Mammary epithelial cell (primary cell): ENCODE measurements at regions of chr17 and their contacts with region 1.

Region 1: GRCh38 chr17:57401556-57402488 is 145.5 kb downstream of the MSI2 start:
- DNase-seq: no peak
- H3K4me3 ChIP-seq: no peak overlapping the region
- H3K27ac ChIP-seq: no peak overlapping the region
- H3K4me1 ChIP-seq: no peaks in the 10 kb centered on the region
- H3K27me3 ChIP-seq: no peaks in the 10 kb centered on the region
- CTCF ChIP-seq: peak; percentile 3 to 19

Region 2: DNA sequence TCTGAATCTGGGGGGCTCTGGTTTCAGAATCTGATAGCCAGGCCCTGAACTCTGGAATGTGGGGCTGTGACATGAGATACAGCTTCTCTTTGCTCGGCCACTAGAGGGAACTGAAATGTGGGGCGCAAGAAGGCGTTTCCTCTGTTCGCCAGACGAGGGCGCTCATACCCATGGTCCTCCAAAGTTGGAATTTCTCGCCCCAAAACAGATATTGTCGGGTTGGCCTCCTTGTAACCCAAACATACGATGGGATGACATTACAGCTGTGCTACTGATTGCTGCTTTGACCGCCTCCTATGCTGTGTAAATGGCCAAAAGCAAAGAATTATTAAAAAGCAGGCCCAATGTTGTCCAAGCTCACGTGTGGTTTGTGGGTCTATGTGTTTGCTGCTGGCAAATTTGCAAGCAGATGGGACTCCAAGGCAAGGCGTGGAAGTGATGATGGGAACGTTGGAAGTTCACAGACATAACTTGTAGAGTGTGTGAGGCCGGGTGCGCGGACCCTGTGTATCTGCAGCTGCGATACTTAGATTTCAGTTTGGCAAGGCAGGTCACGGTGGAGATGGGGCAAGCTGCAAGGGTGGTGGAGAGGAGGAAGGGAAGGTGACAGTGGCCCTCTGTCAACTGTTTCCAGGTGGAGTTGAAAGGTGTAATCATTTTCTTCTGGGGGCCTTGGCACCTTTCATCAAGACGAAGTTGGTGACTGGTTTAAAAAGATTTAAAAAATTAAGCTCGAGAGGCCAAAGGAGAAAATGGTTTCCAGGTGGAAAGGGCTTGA is 158.5 kb before region 1 on chr17:
- CTCF ChIA-PET with region 1: no interaction called
- dilution Hi-C with region 1: no loop called
- in situ Hi-C with region 1: no loop called
- intact Hi-C with region 1: loop called (anchors 1 kb)
- DNase-seq: peak; percentile 45
- H3K4me3 ChIP-seq: no peak overlapping the region
- H3K27ac ChIP-seq: no peak overlapping the region
- H3K4me1 ChIP-seq: no peaks in the 10 kb centered on the region
- H3K27me3 ChIP-seq: no peaks in the 10 kb centered on the region
- CTCF ChIP-seq: peak; percentile 100

Region 3: DNA sequence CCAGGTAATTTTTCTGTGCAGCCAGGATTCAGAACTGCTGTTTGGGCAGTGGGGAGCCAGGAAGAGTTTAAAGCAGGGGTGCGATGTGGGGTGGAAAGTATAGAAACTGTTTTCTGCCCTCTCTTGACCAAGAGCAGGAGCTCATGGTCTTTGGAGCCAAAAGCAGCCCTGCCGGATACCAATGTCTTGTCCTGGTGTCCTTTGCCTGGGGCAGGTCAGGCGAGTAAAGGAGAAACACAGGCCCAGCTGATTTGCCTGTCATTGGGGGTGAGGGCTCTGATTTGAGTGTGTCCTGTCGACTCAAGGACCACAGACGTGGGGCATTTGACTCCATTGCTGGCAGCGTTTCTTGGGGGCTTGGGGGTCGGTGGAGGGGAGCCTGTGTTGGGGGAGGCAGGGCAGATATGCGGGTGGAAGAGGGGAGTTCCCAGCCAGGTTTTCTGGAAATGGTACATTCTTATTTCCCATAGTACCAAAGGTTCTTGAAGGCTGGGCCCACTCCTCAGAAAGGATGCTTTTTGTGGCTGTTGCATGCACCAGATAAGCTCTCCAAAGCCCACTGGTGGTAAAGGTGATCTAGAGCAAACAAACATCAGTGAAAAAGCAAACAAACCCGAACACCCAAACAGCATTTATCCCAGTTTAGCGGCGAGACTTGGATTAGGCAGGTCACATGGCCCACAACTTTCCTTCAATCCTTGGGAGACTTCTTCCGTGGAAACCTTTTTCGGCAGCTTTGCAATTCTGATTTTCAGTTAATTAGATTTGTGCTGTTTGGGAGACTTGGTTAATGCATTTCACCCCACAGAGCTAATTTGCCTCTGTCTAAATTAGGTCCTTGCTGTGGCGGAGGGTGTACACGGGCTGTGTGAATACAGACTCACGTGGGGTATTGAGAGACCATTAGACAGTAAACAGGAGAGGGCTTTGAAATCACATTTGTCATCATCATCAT is 86.5 kb before region 1 on chr17:
- CTCF ChIA-PET with region 1: no interaction called
- dilution Hi-C with region 1: loop called (anchors 5 kb)
- in situ Hi-C with region 1: no loop called
- intact Hi-C with region 1: no loop called
- DNase-seq: no peak
- H3K4me3 ChIP-seq: no peak overlapping the region
- H3K27ac ChIP-seq: no peak overlapping the region
- H3K4me1 ChIP-seq: peaks cover 1% of the 10 kb centered on the region
- H3K27me3 ChIP-seq: no peaks in the 10 kb centered on the region
- CTCF ChIP-seq: no peak

Region 4: GRCh38 chr17:57350277-57350676 is 51.5 kb before region 1 on chr17:
- CTCF ChIA-PET with region 1: no interaction called
- dilution Hi-C with region 1: loop called (anchors 5 kb)
- in situ Hi-C with region 1: no loop called
- intact Hi-C with region 1: no loop called
- DNase-seq: no peak
- H3K4me3 ChIP-seq: no peak overlapping the region
- H3K27ac ChIP-seq: no peak overlapping the region
- H3K4me1 ChIP-seq: no peaks in the 10 kb centered on the region
- H3K27me3 ChIP-seq: no peaks in the 10 kb centered on the region
- CTCF ChIP-seq: no peak

Region 5: DNA sequence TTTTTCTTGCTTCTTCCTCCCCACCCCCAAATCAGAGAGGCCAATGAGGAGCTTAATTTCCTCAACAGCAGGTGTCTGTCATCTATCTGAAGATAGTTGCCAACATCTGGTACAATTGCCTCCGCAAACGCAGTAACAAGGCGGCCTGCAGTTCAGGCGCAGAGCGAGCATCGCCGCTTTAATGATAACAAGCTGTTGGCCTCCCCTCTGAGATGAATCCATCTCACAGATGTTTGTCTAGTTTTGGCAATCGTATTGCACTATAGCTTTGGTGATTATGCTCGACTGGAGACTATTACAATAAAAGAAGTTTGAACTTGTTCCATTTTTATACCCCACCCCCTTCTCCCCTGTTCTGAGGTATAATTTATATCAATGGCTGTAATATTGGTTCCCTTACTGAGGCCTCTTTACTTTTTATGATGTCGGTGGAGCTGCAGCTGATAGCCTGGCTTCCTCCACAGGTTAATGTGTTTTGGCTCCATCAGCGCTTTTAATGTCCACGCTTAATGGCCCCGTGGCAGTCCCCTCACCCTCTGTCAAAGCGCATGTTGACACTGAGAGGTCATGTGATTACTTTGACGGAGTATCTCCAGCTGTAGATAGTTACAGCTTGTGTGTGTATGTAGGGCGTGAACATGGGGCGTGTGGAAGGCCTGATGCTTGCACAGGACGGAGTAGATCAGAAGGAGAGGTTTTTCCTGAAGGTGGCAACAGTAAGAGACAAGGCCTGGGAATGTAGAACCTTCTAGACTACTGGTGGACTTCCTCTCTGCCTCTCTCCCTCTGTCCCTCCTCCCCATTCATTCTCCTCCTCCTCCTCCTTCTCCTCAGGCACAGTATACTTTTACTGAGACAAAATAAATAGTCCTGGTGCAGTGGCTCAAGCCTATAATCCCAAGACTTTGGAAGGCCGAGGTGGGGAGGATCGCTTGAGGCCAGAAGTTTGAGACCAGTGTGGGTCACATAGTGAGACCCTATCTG is 19.2 kb after region 1 on chr17:
- CTCF ChIA-PET with region 1: no interaction called
- dilution Hi-C with region 1: no loop called
- in situ Hi-C with region 1: no loop called
- intact Hi-C with region 1: no loop called
- DNase-seq: no peak
- H3K4me3 ChIP-seq: no peak overlapping the region
- H3K27ac ChIP-seq: no peak overlapping the region
- H3K4me1 ChIP-seq: peaks cover 15% of the 10 kb centered on the region
- H3K27me3 ChIP-seq: no peaks in the 10 kb centered on the region
- CTCF ChIP-seq: no peak

Region 6: DNA sequence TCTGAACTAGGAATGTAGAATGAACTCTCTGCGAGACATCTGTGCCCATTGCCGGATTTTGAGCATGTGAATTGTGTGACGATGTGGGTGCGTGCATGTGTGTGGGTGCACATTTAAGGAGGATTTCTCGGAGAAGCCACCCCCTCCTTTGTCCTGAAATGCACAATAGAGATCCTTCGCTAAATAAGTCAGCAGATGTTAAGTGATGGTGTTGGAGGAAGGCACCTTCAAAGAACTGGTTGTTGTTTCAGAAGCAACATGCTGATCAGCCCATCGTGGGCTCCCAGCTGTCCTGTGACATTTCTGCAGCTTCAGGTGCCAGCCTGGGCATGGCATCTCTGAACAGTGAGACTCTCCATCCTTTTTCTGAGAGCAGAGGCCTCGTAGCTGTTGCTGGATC is 49.4 kb after region 1 on chr17:
- CTCF ChIA-PET with region 1: no interaction called
- dilution Hi-C with region 1: loop called (anchors 5 kb)
- in situ Hi-C with region 1: no loop called
- intact Hi-C with region 1: no loop called
- DNase-seq: no peak
- H3K4me3 ChIP-seq: no peak overlapping the region
- H3K27ac ChIP-seq: no peak overlapping the region
- H3K4me1 ChIP-seq: no peaks in the 10 kb centered on the region
- H3K27me3 ChIP-seq: no peaks in the 10 kb centered on the region
- CTCF ChIP-seq: no peak

Region 7: DNA sequence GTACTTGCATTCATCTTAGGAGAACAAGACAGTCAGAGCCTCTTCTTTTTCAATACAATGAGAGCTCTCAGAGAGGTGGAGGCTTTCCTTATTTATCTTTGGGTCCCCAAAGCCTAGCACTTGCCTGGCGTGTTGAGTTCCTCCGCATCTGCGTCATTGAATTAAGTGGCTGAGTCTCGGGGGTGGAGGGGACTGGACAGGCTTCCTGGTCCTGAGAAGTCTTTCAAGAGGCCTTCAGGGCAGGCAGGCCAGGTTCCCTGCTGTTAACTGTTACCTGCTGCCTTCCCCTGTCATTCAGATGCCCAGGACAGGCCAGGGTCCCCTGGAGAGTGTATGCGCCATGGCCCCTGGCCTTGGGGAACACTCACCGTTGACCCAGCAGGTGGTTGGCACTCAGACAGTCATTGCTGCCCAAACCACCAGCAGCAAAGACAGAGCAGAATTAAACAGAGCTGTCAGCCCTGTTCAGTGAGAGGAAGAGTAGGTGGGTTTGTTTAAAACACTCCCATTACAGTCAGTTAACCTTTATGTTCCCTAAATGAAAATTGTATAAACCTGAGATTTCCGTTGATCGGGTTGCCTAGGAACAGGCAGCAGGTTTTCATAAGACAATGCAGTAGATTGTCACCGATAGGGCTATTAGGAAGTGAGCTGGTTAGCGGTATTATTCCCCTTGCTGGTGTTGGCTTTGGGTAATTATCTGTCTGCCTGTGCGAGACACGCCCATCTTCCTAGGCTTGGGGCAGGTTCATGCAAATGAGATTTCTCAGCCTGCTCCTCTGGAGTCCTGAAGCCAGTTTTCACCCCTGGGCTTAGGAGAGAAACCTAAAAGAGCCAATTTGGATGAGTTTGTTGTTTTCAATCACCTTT is 210.6 kb after region 1 on chr17:
- CTCF ChIA-PET with region 1: no interaction called
- dilution Hi-C with region 1: no loop called
- in situ Hi-C with region 1: no loop called
- intact Hi-C with region 1: no loop called
- DNase-seq: no peak
- H3K4me3 ChIP-seq: no peak overlapping the region
- H3K27ac ChIP-seq: no peak overlapping the region
- H3K4me1 ChIP-seq: peaks cover 4% of the 10 kb centered on the region
- H3K27me3 ChIP-seq: no peaks in the 10 kb centered on the region
- CTCF ChIP-seq: no peak